ENCODE measurements at regions of chr11 and their contacts with region 1.

Region 1: GRCh38 chr11:86193297-86194095 is 51.1 kb upstream of the EED start:
- DNase-seq: no peak
- H3K4me3 ChIP-seq: no peak overlapping the region
- H3K27ac ChIP-seq: no peak overlapping the region
- H3K4me1 ChIP-seq: peaks cover 17% of the 10 kb centered on the region
- H3K27me3 ChIP-seq: no peaks in the 10 kb centered on the region
- CTCF ChIP-seq: peak in 2 of 3 experiments; percentile 25 to 58
- POLR2A ChIP-seq: no peak

Region 2: DNA sequence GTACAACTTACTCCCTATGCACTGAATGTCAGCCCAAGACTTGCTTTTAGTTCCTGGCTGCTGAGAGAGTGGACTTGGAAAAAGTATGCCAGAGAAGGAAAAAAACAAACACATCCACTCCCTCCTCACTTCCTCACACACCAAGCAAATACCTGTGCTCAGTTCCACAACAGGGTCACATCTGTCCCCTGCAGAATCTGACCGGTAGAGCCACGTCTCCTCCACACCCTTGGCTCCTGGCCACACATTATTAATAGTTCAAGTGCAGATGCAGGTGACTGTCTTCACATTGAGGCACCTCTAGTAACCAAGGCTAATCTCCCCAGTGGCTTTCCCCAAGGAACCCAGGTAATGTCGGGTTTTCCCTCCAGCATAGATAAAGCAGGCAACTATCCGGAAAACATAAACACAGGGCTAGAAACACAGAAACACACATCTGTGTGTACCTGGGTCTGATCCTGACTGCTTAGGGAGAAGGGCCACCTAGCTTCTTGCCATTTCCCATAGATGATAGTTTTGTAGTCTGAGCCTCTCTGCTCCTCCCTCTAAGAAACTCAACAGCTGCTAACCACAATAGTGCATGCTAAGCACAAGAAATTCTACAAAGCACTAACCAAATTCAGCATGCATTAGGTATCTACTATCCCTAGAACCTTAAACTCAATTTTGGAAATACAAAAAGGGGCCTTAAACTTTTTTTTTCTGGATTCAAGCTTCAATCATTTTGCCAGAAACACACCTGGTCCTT is 392.7 kb before region 1 on chr11:
- intact Hi-C with region 1: no loop called
- DNase-seq: no peak
- H3K4me3 ChIP-seq: no peak overlapping the region
- H3K27ac ChIP-seq: no peak overlapping the region
- H3K4me1 ChIP-seq: no peaks in the 10 kb centered on the region
- H3K27me3 ChIP-seq: no peaks in the 10 kb centered on the region
- CTCF ChIP-seq: no peak
- POLR2A ChIP-seq: no peak

Region 3: DNA sequence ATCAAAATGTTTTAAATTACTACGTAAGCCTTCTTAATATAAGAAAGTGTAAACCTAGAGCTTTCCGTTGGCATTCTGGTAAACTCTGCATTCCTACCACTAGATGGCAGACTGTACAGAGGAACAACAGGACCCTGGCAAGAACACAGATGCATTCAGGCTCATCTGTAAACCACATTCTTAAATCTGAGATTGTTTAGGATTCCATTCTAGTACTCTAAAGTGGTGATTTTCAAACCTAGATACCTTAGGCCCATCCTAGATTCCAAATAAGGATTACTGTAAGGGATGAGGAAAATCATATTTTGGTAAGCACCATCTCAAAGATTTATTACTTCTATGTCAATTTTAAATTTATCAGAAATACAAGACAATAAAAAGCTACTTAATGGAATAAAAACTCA is 151.5 kb before region 1 on chr11:
- intact Hi-C with region 1: loop called (anchors 10 kb)
- DNase-seq: no peak
- H3K4me3 ChIP-seq: peak overlapping the region; percentile 12 to 23
- H3K27ac ChIP-seq: peak overlapping the region; percentile 59
- H3K4me1 ChIP-seq: peaks cover 59% of the 10 kb centered on the region
- H3K27me3 ChIP-seq: no peaks in the 10 kb centered on the region
- CTCF ChIP-seq: peak; percentile 82 to 99 (median 93)
- POLR2A ChIP-seq: no peak

Region 4: DNA sequence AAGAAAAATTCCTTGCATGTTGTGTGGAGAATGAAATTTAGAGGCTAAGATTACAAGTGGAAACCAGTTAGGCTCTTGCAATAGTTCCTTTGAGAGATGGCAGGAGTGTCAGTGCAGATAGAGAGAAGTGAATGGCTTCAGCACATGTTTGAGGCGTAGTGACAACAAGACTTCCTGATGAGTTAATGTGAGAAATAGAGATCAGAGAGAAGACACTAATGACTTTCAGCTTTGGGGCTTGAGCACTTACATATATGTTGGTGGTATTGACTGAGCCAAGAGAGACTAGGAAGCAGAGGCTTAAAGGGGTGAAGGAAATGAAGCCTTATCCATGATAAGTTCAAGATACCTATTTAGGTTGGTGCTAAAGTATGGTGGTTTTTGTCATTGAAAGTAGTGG is 68.7 kb before region 1 on chr11:
- intact Hi-C with region 1: no loop called
- DNase-seq: no peak
- H3K4me3 ChIP-seq: no peak overlapping the region
- H3K27ac ChIP-seq: no peak overlapping the region
- H3K4me1 ChIP-seq: no peaks in the 10 kb centered on the region
- H3K27me3 ChIP-seq: no peaks in the 10 kb centered on the region
- CTCF ChIP-seq: no peak
- POLR2A ChIP-seq: no peak

Region 5: DNA sequence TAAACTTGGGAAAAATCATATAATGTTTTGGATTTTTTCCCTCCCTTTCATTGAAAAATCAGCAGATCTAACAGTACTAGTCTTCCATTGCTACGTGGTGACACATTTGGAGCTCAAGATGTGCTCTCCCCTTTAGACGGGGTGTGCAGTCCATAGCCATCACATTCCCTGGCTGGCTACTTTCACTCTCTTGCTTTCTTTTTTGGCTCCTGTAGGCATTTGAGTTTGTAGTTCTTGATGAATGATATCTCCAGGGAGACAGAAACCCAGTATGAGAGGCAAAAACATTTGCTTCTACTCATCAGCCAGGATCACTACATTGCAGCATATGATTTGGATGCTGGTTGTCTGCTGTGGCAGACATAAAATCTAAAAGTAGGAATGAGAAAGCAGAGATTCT is 193.2 kb after region 1 on chr11:
- intact Hi-C with region 1: no loop called
- DNase-seq: no peak
- H3K4me3 ChIP-seq: no peak overlapping the region
- H3K27ac ChIP-seq: no peak overlapping the region
- H3K4me1 ChIP-seq: no peaks in the 10 kb centered on the region
- H3K27me3 ChIP-seq: no peaks in the 10 kb centered on the region
- CTCF ChIP-seq: no peak
- POLR2A ChIP-seq: no peak